ENCODE measurements at regions of chr5 and their contacts with region 1.

Region 1: DNA sequence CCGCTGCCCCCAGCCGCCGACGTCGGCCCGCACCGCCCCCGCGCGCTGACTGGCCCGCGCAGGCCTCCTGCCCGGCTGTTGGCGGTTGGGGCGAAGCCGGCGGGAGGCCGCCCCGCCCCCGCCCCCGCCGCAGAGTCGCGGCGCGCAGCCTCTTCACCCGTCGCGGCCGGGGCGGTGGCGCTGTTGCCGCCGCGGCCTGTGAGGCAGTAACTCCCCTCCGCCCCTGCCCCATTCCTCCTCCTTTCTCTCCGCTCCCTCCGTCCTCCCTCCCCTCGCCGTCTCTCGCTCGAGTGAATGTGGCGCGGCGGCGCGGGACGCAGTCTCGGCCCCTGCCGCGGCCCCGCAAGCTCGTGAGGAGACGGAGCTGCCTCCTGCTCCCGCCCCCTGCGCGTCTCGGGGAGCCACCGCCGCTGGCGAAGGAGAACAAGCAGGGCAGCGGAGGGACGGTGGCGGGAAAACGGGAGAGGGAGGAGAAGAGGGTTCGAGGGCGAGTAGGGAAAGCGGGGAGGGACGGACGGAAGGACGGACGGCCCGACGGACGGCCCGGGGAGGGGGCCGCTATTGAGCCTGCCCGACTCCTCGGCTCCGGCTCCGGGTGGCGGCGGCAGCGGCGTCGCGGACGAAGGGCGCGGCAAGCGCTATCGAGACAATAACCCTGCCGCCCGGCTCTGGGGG is 637 bp upstream of the ERBIN start:
- DNase-seq: peak; percentile 69 to 95 (median 78)
- ATAC-seq: peak; percentile 65
- H3K4me3 ChIP-seq: peak overlapping the region; percentile 87
- H3K4me3 Mint-ChIP-seq: peak overlapping the region; percentile 98
- H3K27ac ChIP-seq: peak overlapping the region; percentile 92 to 98
- H3K27ac Mint-ChIP-seq: peak overlapping the region; percentile 88
- H3K4me1 ChIP-seq: peaks cover 26% of the 10 kb centered on the region
- H3K4me1 Mint-ChIP-seq: peaks cover 48% of the 10 kb centered on the region
- H3K27me3 ChIP-seq: no peaks in the 10 kb centered on the region
- H3K27me3 Mint-ChIP-seq: no peaks in the 10 kb centered on the region
- CTCF ChIP-seq: no peak

Region 2: GRCh38 chr5:65562731-65563701 is 362.7 kb before region 1 on chr5 and contains the starts of genes CENPK and PPWD1:
- CTCF ChIA-PET with region 1: no interaction called
- POLR2A ChIA-PET with region 1: interaction called, 20 read pairs
- intact Hi-C with region 1: no loop called
- DNase-seq: peak; percentile 89 to 97 (median 93)
- ATAC-seq: peak; percentile 96
- H3K4me3 ChIP-seq: peak within 1 kb of the TSS; percentile 75
- H3K4me3 Mint-ChIP-seq: peak within 1 kb of the TSS; percentile 95
- H3K27ac ChIP-seq: peak within 1 kb of the TSS; percentile 93 to 94
- H3K27ac Mint-ChIP-seq: peak within 1 kb of the TSS; percentile 94
- H3K4me1 ChIP-seq: peaks cover 15% of the 10 kb centered on the region
- H3K4me1 Mint-ChIP-seq: peaks cover 64% of the 10 kb centered on the region
- H3K27me3 ChIP-seq: no peaks in the 10 kb centered on the region
- H3K27me3 Mint-ChIP-seq: no peaks in the 10 kb centered on the region
- CTCF ChIP-seq: no peak
- total RNA-seq, gene CENPK: 14.4 to 16.8 TPM
- total RNA-seq, gene PPWD1: 88.0 to 89.2 TPM

Region 3: GRCh38 chr5:65577141-65577540 is 348.6 kb before region 1 on chr5:
- CTCF ChIA-PET with region 1: no interaction called
- POLR2A ChIA-PET with region 1: no interaction called
- intact Hi-C with region 1: no loop called
- DNase-seq: no peak
- ATAC-seq: no peak
- H3K4me3 ChIP-seq: no peak overlapping the region
- H3K4me3 Mint-ChIP-seq: no peak overlapping the region
- H3K27ac ChIP-seq: no peak overlapping the region
- H3K27ac Mint-ChIP-seq: no peak overlapping the region
- H3K4me1 ChIP-seq: no peaks in the 10 kb centered on the region
- H3K4me1 Mint-ChIP-seq: peaks cover 46% of the 10 kb centered on the region
- H3K27me3 ChIP-seq: no peaks in the 10 kb centered on the region
- H3K27me3 Mint-ChIP-seq: no peaks in the 10 kb centered on the region
- CTCF ChIP-seq: no peak

Region 4: DNA sequence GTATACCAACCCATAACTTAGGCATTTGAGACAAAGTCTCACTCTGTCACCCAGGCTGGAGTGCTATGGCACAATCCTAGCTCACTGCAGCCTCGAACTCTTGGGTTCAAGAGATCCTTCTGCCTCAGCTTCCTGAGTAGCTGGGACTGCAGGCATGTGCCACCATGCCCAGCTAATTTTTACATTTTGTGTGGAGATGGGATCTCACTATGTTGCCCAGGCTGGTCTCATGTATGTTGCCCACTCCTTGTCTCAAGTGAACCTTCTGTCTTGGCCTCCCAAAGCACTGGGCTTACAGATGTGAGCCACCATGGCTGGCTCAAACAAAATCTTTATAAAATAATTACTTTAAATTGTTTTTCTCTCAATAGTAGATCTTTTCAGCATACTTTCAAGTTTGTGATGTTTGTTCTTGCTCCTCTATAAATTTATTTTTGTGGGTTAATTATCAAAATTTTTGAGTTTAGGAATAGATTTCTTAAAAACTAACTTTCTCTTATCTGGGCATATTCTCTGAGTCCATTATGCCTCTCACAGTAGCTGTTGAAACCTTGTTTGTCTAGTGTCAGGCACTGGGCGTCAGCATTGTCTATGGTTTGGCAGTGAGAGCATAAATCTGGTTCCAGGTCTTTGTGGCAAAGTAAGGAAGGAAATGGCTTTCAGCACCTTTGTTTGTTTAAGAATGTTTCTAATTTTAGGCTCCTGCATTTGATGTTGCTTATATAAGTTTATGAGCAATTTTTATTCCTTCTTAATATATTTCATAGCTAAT is 165.0 kb before region 1 on chr5:
- CTCF ChIA-PET with region 1: no interaction called
- POLR2A ChIA-PET with region 1: interaction called, 31 read pairs
- intact Hi-C with region 1: loop called in 1 of 2 experiments (anchors 2 kb)
- DNase-seq: peak; percentile 31 to 85 (median 57)
- ATAC-seq: peak; percentile 100
- H3K4me3 ChIP-seq: no peak overlapping the region
- H3K4me3 Mint-ChIP-seq: no peak overlapping the region
- H3K27ac ChIP-seq: no peak overlapping the region
- H3K27ac Mint-ChIP-seq: no peak overlapping the region
- H3K4me1 ChIP-seq: peaks cover 12% of the 10 kb centered on the region
- H3K4me1 Mint-ChIP-seq: peaks cover 6% of the 10 kb centered on the region
- H3K27me3 ChIP-seq: no peaks in the 10 kb centered on the region
- H3K27me3 Mint-ChIP-seq: no peaks in the 10 kb centered on the region
- CTCF ChIP-seq: peak; percentile 81

Region 5: GRCh38 chr5:65871182-65871581 is 54.6 kb before region 1 on chr5:
- CTCF ChIA-PET with region 1: no interaction called
- POLR2A ChIA-PET with region 1: interaction called, 20 read pairs
- intact Hi-C with region 1: loop called (anchors 2 to 5 kb)
- DNase-seq: no peak
- ATAC-seq: no peak
- H3K4me3 ChIP-seq: no peak overlapping the region
- H3K4me3 Mint-ChIP-seq: no peak overlapping the region
- H3K27ac ChIP-seq: no peak overlapping the region
- H3K27ac Mint-ChIP-seq: no peak overlapping the region
- H3K4me1 ChIP-seq: peaks cover 13% of the 10 kb centered on the region
- H3K4me1 Mint-ChIP-seq: peaks cover 24% of the 10 kb centered on the region
- H3K27me3 ChIP-seq: no peaks in the 10 kb centered on the region
- H3K27me3 Mint-ChIP-seq: no peaks in the 10 kb centered on the region
- CTCF ChIP-seq: no peak

Region 6: GRCh38 chr5:65883461-65883860 is 42.3 kb before region 1 on chr5:
- CTCF ChIA-PET with region 1: no interaction called
- POLR2A ChIA-PET with region 1: no interaction called
- intact Hi-C with region 1: no loop called
- DNase-seq: no peak
- ATAC-seq: no peak
- H3K4me3 ChIP-seq: no peak overlapping the region
- H3K4me3 Mint-ChIP-seq: no peak overlapping the region
- H3K27ac ChIP-seq: no peak overlapping the region
- H3K27ac Mint-ChIP-seq: no peak overlapping the region
- H3K4me1 ChIP-seq: no peaks in the 10 kb centered on the region
- H3K4me1 Mint-ChIP-seq: no peaks in the 10 kb centered on the region
- H3K27me3 ChIP-seq: no peaks in the 10 kb centered on the region
- H3K27me3 Mint-ChIP-seq: no peaks in the 10 kb centered on the region
- CTCF ChIP-seq: no peak

Region 7: DNA sequence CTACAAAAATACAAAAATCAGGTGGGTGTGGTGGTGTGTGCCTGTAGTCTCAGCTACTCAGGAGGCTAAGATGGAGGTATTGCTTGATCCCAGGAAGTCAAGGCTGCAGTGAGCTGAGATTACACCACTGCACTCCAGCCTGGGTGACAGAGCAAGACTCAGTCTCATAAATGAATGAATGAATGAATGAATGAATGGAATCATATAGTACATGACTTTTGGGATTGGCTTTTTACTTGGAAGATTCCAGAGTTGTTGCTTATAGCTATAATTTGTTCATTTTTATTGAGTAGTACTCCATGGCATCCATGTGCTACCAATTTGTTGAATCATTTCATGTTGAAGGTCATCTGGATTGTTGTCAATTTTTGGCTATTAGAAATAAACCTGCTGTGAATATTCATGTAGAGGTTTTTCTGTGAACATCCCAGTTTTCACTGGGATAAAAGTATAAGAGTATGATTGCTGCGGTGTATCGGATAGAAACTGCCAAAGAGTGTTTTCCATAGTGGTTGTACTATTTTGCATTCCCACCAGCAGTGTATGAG is 20.5 kb after region 1 on chr5:
- CTCF ChIA-PET with region 1: interaction called, 3 read pairs
- POLR2A ChIA-PET with region 1: interaction called, 12 read pairs
- intact Hi-C with region 1: loop called in 1 of 2 experiments (anchors 2 kb)
- DNase-seq: no peak
- ATAC-seq: no peak
- H3K4me3 ChIP-seq: no peak overlapping the region
- H3K4me3 Mint-ChIP-seq: no peak overlapping the region
- H3K27ac ChIP-seq: no peak overlapping the region
- H3K27ac Mint-ChIP-seq: no peak overlapping the region
- H3K4me1 ChIP-seq: peaks cover 4% of the 10 kb centered on the region
- H3K4me1 Mint-ChIP-seq: peaks cover 90% of the 10 kb centered on the region
- H3K27me3 ChIP-seq: no peaks in the 10 kb centered on the region
- H3K27me3 Mint-ChIP-seq: no peaks in the 10 kb centered on the region
- CTCF ChIP-seq: no peak

Region 8: GRCh38 chr5:65970481-65971367 is 45.0 kb after region 1 on chr5:
- CTCF ChIA-PET with region 1: interaction called, 3 read pairs
- POLR2A ChIA-PET with region 1: interaction called, 20 read pairs
- intact Hi-C with region 1: loop called (anchors 2 to 5 kb)
- DNase-seq: no peak
- ATAC-seq: no peak
- H3K4me3 ChIP-seq: no peak overlapping the region
- H3K4me3 Mint-ChIP-seq: peak overlapping the region; percentile 52
- H3K27ac ChIP-seq: no peak overlapping the region
- H3K27ac Mint-ChIP-seq: peak overlapping the region; percentile 77
- H3K4me1 ChIP-seq: peaks cover 22% of the 10 kb centered on the region
- H3K4me1 Mint-ChIP-seq: peaks cover 82% of the 10 kb centered on the region
- H3K27me3 ChIP-seq: no peaks in the 10 kb centered on the region
- H3K27me3 Mint-ChIP-seq: no peaks in the 10 kb centered on the region
- CTCF ChIP-seq: no peak

Region 9: GRCh38 chr5:66144074-66144833 is 218.5 kb after region 1 on chr5 and contains the start of gene SREK1:
- CTCF ChIA-PET with region 1: no interaction called
- POLR2A ChIA-PET with region 1: interaction called, 33 read pairs
- intact Hi-C with region 1: loop called (anchors 2 kb)
- DNase-seq: peak; percentile 76 to 94 (median 84)
- ATAC-seq: peak; percentile 84
- H3K4me3 ChIP-seq: peak within 1 kb of the TSS; percentile 94
- H3K4me3 Mint-ChIP-seq: peak within 1 kb of the TSS; percentile 100
- H3K27ac ChIP-seq: peak within 1 kb of the TSS; percentile 97 to 100
- H3K27ac Mint-ChIP-seq: peak within 1 kb of the TSS; percentile 100
- H3K4me1 ChIP-seq: peaks cover 10% of the 10 kb centered on the region
- H3K4me1 Mint-ChIP-seq: peaks cover 49% of the 10 kb centered on the region
- H3K27me3 ChIP-seq: no peaks in the 10 kb centered on the region
- H3K27me3 Mint-ChIP-seq: no peaks in the 10 kb centered on the region
- CTCF ChIP-seq: no peak
- total RNA-seq, gene SREK1: 137 to 155 TPM

Region 10: GRCh38 chr5:66337626-66338226 is 412.0 kb after region 1 on chr5:
- CTCF ChIA-PET with region 1: no interaction called
- POLR2A ChIA-PET with region 1: no interaction called
- intact Hi-C with region 1: no loop called
- DNase-seq: no peak
- ATAC-seq: no peak
- H3K4me3 ChIP-seq: no peak overlapping the region
- H3K4me3 Mint-ChIP-seq: no peak overlapping the region
- H3K27ac ChIP-seq: no peak overlapping the region
- H3K27ac Mint-ChIP-seq: no peak overlapping the region
- H3K4me1 ChIP-seq: no peaks in the 10 kb centered on the region
- H3K4me1 Mint-ChIP-seq: no peaks in the 10 kb centered on the region
- H3K27me3 ChIP-seq: peaks cover 0 to 6% of the 10 kb centered on the region in 2 experiments
- H3K27me3 Mint-ChIP-seq: peaks cover 27% of the 10 kb centered on the region
- CTCF ChIP-seq: no peak